Sigmoid colon (tissue), 7 donors: ENCODE measurements at regions of chr3 and their contacts with region 1.

Region 1: DNA sequence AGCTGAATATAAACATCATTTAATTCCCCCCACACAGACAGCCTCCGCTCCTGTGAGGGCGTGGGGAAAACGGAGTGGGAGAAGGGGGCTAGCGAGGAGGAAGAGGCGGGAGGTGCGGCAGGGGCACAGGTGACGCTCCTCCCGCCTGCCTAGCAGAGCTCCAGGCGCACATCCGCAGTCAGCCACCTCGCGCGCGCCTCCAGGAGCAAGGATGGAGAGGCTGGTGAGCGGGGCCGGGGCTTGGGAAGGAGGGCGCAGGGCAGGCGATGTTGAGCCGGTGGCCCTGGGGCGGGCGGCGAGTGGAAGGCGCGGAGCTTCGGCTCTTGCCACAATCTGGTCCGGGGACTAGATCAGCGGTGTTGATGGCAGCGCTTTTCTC is at the start of gene CD200:
- DNase-seq: peak; percentile 79
- H3K4me3 ChIP-seq: peak within 1 kb of the TSS; percentile 42 to 69 (median 66)
- H3K27ac ChIP-seq: peak within 1 kb of the TSS; percentile 77 to 85 (median 82)
- H3K4me1 ChIP-seq: peaks cover 0 to 11% (median 8%) of the 10 kb centered on the region in 4 donors
- H3K27me3 ChIP-seq: no peaks in the 10 kb centered on the region
- CTCF ChIP-seq: peak in 1 of 4 experiments; percentile 14
- EP300 ChIP-seq: no peak
- POLR2A ChIP-seq: peak in 1 of 2 donors; percentile 46
- total RNA-seq, gene CD200: 4.4 to 13.0 (median 4.8) TPM

Region 2: GRCh38 chr3:111998636-111999483 is 334.1 kb before region 1 on chr3 and contains the start of gene TAGLN3:
- intact Hi-C with region 1: no loop called
- DNase-seq: no peak
- H3K4me3 ChIP-seq: peak within 1 kb of the TSS; percentile 5 to 39 (median 27)
- H3K27ac ChIP-seq: no peak within 1 kb of the TSS
- H3K4me1 ChIP-seq: peaks cover 0 to 13% (median 12%) of the 10 kb centered on the region in 4 donors
- H3K27me3 ChIP-seq: peaks cover 0 to 22% (median 0%) of the 10 kb centered on the region in 3 donors
- CTCF ChIP-seq: no peak
- EP300 ChIP-seq: no peak
- POLR2A ChIP-seq: no peak
- total RNA-seq, gene TAGLN3: 7.7 to 17.8 (median 16.7) TPM

Region 3: GRCh38 chr3:112390783-112391641 is 58.0 kb after region 1 on chr3:
- intact Hi-C with region 1: loop called (anchors 5 kb)
- DNase-seq: no peak
- H3K4me3 ChIP-seq: no peak overlapping the region
- H3K27ac ChIP-seq: peak overlapping the region; percentile 69 to 82 (median 78)
- H3K4me1 ChIP-seq: peaks cover 0 to 46% (median 38%) of the 10 kb centered on the region in 4 donors
- H3K27me3 ChIP-seq: no peaks in the 10 kb centered on the region
- CTCF ChIP-seq: no peak
- EP300 ChIP-seq: no peak
- POLR2A ChIP-seq: no peak